ENCODE measurements at regions of chr9 and their contacts with region 1.

Region 1: DNA sequence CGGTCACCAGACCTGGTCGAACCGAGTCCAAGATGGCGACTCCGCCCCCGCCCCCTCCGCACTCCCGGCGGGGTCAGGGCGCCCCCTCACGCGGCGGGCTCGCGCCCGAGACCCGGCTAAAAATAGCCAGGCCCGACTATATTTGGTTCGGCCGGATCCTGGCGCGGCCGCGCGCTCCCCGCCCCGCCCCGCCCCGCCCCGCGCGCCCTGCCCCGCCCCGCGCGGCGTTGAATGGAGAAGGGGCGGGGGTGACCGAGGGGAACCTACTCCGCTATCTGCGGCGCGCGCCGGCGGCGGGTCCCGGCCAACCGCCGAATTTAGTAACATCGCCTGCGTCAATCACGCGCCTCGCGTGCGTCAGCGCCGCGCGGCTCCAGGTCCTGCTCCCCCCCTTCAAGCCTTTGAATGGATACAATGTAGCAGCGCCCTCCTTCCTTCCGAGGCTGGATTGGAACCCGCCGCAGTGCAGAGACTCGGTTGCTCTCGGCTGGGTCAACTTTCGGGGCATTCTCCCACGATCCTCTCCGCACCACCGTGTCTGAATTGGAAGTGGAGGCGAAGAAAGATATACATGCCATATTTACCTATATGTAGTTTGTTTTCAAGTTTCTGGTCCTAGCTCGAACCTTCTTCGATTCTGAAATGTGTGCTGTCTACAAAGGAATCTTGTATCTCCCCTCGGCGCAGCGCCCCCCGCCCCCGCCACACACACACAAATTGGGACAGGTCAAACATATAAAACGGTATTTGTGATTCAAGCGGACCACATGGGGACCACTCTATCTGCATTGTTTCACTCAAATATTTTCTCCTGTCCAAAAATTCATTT is 1.6 kb upstream of the NR4A3 start:
- DNase-seq: peak; percentile 91 to 93
- H3K4me3 ChIP-seq: peak overlapping the region; percentile 77
- H3K4me1 ChIP-seq: peaks cover 9% of the 10 kb centered on the region
- H3K27me3 ChIP-seq: no peaks in the 10 kb centered on the region

Region 2: DNA sequence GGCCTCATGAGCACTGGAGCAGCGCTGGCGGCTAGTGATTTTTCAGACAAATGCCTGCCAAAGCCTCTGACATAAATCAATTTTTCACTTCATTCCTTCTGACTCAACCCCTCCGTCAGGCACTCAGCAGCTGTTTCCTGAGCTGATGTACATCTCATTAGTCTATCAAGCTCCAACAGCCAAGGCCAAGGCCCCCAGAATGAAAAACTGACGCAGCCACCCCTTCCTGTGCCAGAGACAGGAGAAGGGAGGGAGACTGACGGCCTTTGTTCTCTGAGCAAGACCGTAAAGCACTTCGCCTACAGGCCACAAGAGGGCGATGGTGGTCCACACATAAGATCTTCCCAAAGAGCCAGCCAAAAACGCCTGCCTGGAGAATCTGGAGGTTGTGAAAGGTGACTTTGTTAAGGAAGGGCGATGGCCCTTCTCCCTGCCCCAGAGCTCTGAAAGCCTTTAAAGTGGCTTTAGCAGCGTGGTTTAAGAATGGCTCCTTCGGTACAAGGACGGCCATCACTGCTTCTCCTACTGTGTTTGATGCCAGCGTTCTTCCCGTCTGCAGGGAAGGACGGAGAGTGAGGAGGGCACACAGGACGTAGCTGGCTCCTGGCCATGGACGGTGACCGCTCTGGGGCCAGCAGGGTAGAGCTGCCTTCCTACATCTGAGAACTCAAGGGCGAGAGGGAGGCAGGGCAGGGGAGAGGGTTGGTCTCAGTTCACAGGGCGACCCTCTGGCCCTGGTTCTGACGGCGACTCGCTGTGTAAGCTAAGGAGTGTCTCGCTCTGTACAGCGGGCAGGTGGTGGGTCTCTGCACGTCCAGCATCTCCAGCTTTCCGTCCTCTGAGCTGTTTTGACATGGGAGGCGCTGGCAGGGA is 635.4 kb before region 1 on chr9:
- in situ Hi-C with region 1: no loop called
- DNase-seq: peak; percentile 67 to 89
- H3K4me3 ChIP-seq: no peak overlapping the region
- H3K4me1 ChIP-seq: no peaks in the 10 kb centered on the region
- H3K27me3 ChIP-seq: peaks cover 13% of the 10 kb centered on the region

Region 3: GRCh38 chr9:99889121-99889520 is 69.1 kb after region 1 on chr9:
- in situ Hi-C with region 1: no loop called
- DNase-seq: no peak
- H3K4me3 ChIP-seq: no peak overlapping the region
- H3K4me1 ChIP-seq: no peaks in the 10 kb centered on the region; the same call in 1 of the 2 replicates
- H3K27me3 ChIP-seq: peaks cover 12% of the 10 kb centered on the region

Region 4: GRCh38 chr9:100322954-100323536 is 503.0 kb after region 1 on chr9:
- in situ Hi-C with region 1: loop called (anchors 25 kb)
- DNase-seq: peak; percentile 34 to 54
- H3K4me3 ChIP-seq: no peak overlapping the region
- H3K4me1 ChIP-seq: no peaks in the 10 kb centered on the region
- H3K27me3 ChIP-seq: no peaks in the 10 kb centered on the region

Measured in HAP-1 (cell line).